ENCODE measurements at regions of chr20 and their contacts with region 1.

Region 1: GRCh38 chr20:34704177-34705007 is at the start of gene TP53INP2:
- DNase-seq: peak; percentile 89
- ATAC-seq: peak; percentile 33
- H3K4me3 Mint-ChIP-seq: peak within 1 kb of the TSS; percentile 82
- H3K27ac Mint-ChIP-seq: peak within 1 kb of the TSS; percentile 63
- H3K4me1 Mint-ChIP-seq: peaks cover 22% of the 10 kb centered on the region
- H3K27me3 Mint-ChIP-seq: peaks cover 10% of the 10 kb centered on the region
- total RNA-seq, gene TP53INP2: 2.2 to 2.3 TPM

Region 2: GRCh38 chr20:34363062-34363464 is 341.3 kb before region 1 on chr20 and contains the start of gene ITCH:
- CTCF ChIA-PET with region 1: no interaction called
- POLR2A ChIA-PET with region 1: no interaction called
- intact Hi-C with region 1: loop called in 1 of 2 experiments (anchors 1 kb)
- DNase-seq: peak; percentile 97
- ATAC-seq: peak; percentile 99
- H3K4me3 Mint-ChIP-seq: peak within 1 kb of the TSS; percentile 91
- H3K27ac Mint-ChIP-seq: peak within 1 kb of the TSS; percentile 98
- H3K4me1 Mint-ChIP-seq: peaks cover 38% of the 10 kb centered on the region
- H3K27me3 Mint-ChIP-seq: no peaks in the 10 kb centered on the region
- total RNA-seq, gene ITCH: 41.4 to 43.5 TPM

Region 3: GRCh38 chr20:34385464-34385863 is 318.9 kb before region 1 on chr20:
- CTCF ChIA-PET with region 1: no interaction called
- POLR2A ChIA-PET with region 1: no interaction called
- intact Hi-C with region 1: no loop called
- DNase-seq: no peak
- ATAC-seq: no peak
- H3K4me3 Mint-ChIP-seq: no peak overlapping the region
- H3K27ac Mint-ChIP-seq: no peak overlapping the region
- H3K4me1 Mint-ChIP-seq: peaks cover 20% of the 10 kb centered on the region
- H3K27me3 Mint-ChIP-seq: no peaks in the 10 kb centered on the region

Region 4: GRCh38 chr20:34538671-34539123 is 165.7 kb before region 1 on chr20:
- CTCF ChIA-PET with region 1: interaction called, 17 read pairs
- POLR2A ChIA-PET with region 1: no interaction called
- intact Hi-C with region 1: loop called (anchors 1 to 2 kb)
- DNase-seq: peak; percentile 78
- ATAC-seq: peak; percentile 61
- H3K4me3 Mint-ChIP-seq: no peak overlapping the region
- H3K27ac Mint-ChIP-seq: no peak overlapping the region
- H3K4me1 Mint-ChIP-seq: peaks cover 7% of the 10 kb centered on the region
- H3K27me3 Mint-ChIP-seq: no peaks in the 10 kb centered on the region

Region 5: DNA sequence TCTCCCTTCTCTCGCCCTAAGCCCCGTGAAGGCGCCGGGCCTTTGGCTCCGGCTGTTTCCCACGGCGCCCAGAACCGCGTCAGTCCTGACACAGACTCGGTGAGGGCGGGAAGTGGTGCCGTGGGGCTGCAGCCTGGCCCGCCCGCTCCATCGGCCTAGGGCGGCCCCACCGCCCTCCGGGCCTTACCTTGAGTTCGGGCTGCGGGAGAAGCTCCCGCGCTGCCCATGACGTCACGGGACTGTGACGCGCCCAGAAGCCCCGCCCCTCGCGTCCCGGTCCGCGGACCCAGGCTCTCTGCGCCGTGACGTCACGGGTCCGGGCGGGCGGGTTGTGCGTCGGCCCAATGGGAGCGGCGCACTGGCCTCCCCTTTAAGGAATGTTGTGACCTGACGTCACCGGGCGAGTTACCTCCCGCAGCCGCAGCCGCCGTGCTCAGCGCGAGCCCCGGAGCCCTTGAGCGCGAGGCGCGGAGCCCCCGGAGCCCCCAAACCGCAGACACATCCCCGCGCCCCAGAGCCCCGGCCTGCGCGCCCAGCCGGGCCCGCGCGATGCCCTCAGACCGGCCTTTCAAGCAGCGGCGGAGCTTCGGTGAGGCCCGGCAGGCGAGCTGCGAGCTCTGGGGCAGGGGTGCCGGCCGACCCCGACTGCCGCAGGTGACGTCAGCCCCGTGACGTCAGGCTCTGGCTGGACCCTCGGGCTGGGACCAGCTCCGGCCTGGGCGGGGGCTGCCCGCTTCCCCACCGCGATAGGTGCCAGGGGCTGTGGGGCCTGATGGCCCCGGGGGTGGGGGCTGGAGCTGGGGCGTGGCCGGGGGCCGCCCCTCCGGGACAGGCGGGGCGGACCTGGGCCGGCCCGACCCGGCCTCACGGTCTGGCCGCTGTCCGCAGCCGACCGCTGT is 145.8 kb before region 1 on chr20 and contains the start of gene MAP1LC3A:
- CTCF ChIA-PET with region 1: interaction called, 4 read pairs
- POLR2A ChIA-PET with region 1: no interaction called
- intact Hi-C with region 1: loop called (anchors 1 to 2 kb)
- DNase-seq: peak; percentile 96
- ATAC-seq: peak; percentile 87
- H3K4me3 Mint-ChIP-seq: peak within 1 kb of the TSS; percentile 79
- H3K27ac Mint-ChIP-seq: peak within 1 kb of the TSS; percentile 88
- H3K4me1 Mint-ChIP-seq: peaks cover 14% of the 10 kb centered on the region
- H3K27me3 Mint-ChIP-seq: no peaks in the 10 kb centered on the region
- total RNA-seq, gene MAP1LC3A: 2.5 to 2.7 TPM

Region 6: GRCh38 chr20:34676642-34677373 is 27.6 kb before region 1 on chr20 and contains the start of gene PIGU:
- CTCF ChIA-PET with region 1: interaction called, 4 read pairs
- POLR2A ChIA-PET with region 1: interaction called, 4 read pairs
- intact Hi-C with region 1: loop called (anchors 1 kb)
- DNase-seq: peak; percentile 98
- ATAC-seq: peak; percentile 97
- H3K4me3 Mint-ChIP-seq: peak within 1 kb of the TSS; percentile 97
- H3K27ac Mint-ChIP-seq: peak within 1 kb of the TSS; percentile 96
- H3K4me1 Mint-ChIP-seq: peaks cover 34% of the 10 kb centered on the region
- H3K27me3 Mint-ChIP-seq: no peaks in the 10 kb centered on the region
- total RNA-seq, gene PIGU: 21.1 to 28.2 TPM

Region 7: GRCh38 chr20:34768096-34768495 is 63.7 kb after region 1 on chr20:
- CTCF ChIA-PET with region 1: interaction called, 6 read pairs
- POLR2A ChIA-PET with region 1: no interaction called
- intact Hi-C with region 1: loop called in 1 of 2 experiments (anchors 2 kb)
- DNase-seq: no peak
- ATAC-seq: no peak
- H3K4me3 Mint-ChIP-seq: no peak overlapping the region
- H3K27ac Mint-ChIP-seq: no peak overlapping the region
- H3K4me1 Mint-ChIP-seq: no peaks in the 10 kb centered on the region
- H3K27me3 Mint-ChIP-seq: no peaks in the 10 kb centered on the region

Region 8: GRCh38 chr20:34825530-34826362 is 121.4 kb after region 1 on chr20 and contains the start of gene NCOA6:
- CTCF ChIA-PET with region 1: no interaction called
- POLR2A ChIA-PET with region 1: no interaction called
- intact Hi-C with region 1: loop called in 1 of 2 experiments (anchors 1 kb)
- DNase-seq: peak; percentile 95
- ATAC-seq: peak; percentile 67
- H3K4me3 Mint-ChIP-seq: peak within 1 kb of the TSS; percentile 86
- H3K27ac Mint-ChIP-seq: peak within 1 kb of the TSS; percentile 95
- H3K4me1 Mint-ChIP-seq: peaks cover 30% of the 10 kb centered on the region
- H3K27me3 Mint-ChIP-seq: no peaks in the 10 kb centered on the region
- total RNA-seq, gene NCOA6: 20.3 to 31.1 TPM

Measured in activated CD4-positive, alpha-beta T cell treated with anti-CD3 and anti-CD28 coated beads for 36 hours (primary cell).